ENCODE measurements at regions of chr10 and their contacts with region 1.

Region 1: DNA sequence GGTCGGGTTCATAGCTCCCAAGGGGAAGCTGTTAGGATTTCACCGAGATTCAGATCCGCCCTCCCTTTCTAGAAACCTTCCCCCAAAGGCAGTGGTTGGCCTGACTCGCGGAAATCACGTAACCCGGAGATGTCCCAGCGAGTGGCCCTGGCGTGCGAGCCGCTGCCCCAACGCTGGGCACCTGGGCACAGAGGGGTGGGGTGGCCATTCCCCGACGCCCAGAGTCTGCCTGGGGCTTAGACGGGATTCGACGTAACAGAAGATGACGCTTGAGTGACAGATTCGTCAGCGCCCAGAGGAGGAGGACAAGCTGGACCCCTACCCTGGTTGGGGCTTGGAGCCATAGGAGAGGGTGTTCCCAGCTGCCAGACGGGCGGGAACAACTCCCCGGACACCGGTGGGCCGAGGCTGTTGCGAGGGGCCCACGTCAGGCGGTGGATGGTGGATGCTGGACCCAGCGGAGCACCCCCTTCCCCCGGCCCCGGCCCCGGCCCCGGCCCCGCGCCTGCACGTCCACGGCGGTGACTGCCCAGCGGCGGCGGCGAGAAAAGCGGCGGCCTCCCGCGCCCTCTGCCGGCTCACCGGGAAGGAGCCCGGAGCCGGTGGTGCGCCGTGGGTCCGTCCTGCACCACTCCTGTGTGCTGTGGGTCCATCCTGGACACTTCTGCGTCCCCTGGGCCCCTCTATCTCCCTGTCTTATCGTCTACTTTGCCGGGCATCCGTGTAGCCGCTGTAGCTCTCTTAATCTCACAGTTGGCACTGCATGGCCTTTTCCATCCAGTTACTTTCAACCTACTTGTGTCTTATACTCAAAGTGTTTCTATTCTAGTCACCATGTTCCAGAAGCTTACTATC is 35.4 kb upstream of the KNDC1 start:
- H3K4me3 ChIP-seq: no peak overlapping the region
- H3K27ac ChIP-seq: no peak overlapping the region
- H3K4me1 ChIP-seq: no peaks in the 10 kb centered on the region
- CTCF ChIP-seq: peak; percentile 71

Region 2: DNA sequence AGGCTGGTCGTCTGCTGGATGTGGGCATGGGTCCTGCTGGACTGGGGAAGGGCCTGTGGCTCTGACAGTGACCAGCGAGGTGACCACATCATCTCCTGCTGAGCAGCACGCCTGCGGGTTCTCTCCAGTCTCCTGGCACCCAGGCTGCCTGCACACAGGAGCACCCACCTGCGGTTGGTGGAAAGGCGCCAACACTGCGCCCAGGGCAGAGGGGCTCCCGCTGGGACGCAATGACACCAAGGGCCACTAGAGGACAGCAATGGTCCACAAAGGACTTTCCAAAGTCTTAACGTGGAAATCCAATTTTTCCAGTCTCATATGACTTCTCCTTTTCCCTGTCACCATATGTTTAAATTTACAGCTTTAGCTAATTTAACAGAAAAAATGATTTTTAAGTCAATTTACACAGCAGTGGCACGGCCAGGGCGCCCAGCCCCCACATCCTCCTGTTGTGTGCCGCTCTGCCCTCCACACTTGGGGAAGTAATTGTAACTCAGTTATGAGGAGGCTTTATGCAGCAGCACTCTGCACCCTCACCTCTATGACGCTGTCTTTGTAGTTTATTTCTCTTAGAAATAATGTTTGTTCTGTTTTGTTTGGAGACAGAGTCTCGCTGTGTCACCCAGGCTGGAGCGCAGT is 220.3 kb before region 1 on chr10:
- CTCF ChIA-PET with region 1: interaction called, 31 read pairs
- POLR2A ChIA-PET with region 1: no interaction called
- H3K4me3 ChIP-seq: no peak overlapping the region
- H3K27ac ChIP-seq: no peak overlapping the region
- H3K4me1 ChIP-seq: no peaks in the 10 kb centered on the region
- CTCF ChIP-seq: peak; percentile 80

Region 3: GRCh38 chr10:132939957-132940790 is 184.4 kb before region 1 on chr10:
- CTCF ChIA-PET with region 1: interaction called, 23 read pairs
- POLR2A ChIA-PET with region 1: no interaction called
- H3K4me3 ChIP-seq: no peak overlapping the region
- H3K27ac ChIP-seq: no peak overlapping the region
- H3K4me1 ChIP-seq: no peaks in the 10 kb centered on the region
- CTCF ChIP-seq: peak; percentile 71

Region 4: GRCh38 chr10:132972986-132973902 is 151.3 kb before region 1 on chr10:
- CTCF ChIA-PET with region 1: no interaction called
- POLR2A ChIA-PET with region 1: no interaction called
- H3K4me3 ChIP-seq: no peak overlapping the region
- H3K27ac ChIP-seq: no peak overlapping the region
- H3K4me1 ChIP-seq: no peaks in the 10 kb centered on the region
- CTCF ChIP-seq: no peak